ENCODE measurements at regions of chr18 and their contacts with region 1.

Region 1: GRCh38 chr18:22214731-22215528 is 45.5 kb downstream of the GATA6 start:
- DNase-seq: no peak

Region 2: GRCh38 chr18:22257022-22257543 is 42.2 kb after region 1 on chr18:
- intact Hi-C with region 1: loop called (anchors 5 kb)
- DNase-seq: no peak

Measured in cardiac septum (tissue), 1 donor.